Dendritic cell treated with granulocyte-macrophage colony-stimulating factor and Interleukin-4, amounts not matched to agents 40 ng/mL and 50 ng/mL, for 4 days (primary cell): ENCODE measurements at regions of chr15 and their contacts with region 1.

Region 1: GRCh38 chr15:32730677-32731654 is 13.2 kb downstream of the GREM1 start:
- H3K4me3 Mint-ChIP-seq: no peak overlapping the region
- H3K27ac Mint-ChIP-seq: no peak overlapping the region
- H3K4me1 Mint-ChIP-seq: peaks cover 11% of the 10 kb centered on the region
- H3K27me3 Mint-ChIP-seq: peaks cover 37% of the 10 kb centered on the region

Region 2: GRCh38 chr15:32790352-32790999 is 59.5 kb after region 1 on chr15:
- intact Hi-C with region 1: loop called (anchors 10 kb)
- H3K4me3 Mint-ChIP-seq: no peak overlapping the region
- H3K27ac Mint-ChIP-seq: no peak overlapping the region
- H3K4me1 Mint-ChIP-seq: no peaks in the 10 kb centered on the region
- H3K27me3 Mint-ChIP-seq: no peaks in the 10 kb centered on the region